ENCODE measurements at regions of chr22 and their contacts with region 1.

Region 1: DNA sequence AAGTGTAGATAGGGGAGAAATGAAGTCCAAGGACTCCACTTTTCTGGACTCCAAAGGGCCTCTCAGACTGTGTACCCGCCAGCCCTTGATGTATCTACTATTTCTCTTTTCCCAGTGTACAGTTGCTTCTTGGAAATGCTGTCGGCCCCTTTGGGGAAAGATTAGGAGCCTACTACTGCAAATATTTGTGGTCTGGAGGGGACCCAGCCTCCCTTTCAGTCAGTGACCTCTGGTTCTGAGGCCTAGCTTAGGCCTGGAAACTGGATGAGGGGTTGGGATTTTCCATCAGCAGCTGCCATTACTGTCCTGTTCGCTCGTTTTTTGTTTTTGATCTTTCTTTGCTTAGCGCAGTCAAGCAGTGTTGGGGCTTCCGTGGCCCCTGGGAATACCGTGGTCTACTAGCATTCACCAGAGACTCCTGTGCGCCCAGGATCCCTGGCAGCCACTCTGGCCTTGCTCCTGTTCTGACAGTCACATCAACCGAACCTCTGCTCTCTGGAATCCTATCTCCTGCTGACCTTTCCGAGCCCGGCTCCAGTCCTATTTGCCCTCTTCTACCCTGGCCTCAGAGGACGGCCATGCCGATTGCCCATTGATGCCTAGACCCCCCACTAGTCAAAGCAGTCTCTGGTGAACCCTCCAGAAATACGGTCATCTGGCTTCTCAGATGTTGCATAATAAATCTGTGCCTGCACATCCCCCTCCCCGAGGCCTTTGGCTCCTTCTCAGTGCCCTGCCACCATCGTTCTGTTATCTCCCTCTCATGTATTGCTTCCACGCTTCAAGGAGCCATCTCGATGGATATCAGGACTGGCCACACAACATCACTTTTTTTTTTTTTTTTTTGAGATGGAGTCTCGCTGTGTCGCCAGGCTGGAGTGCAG is 1.3 kb upstream of the RRP7A start:
- DNase-seq: no peak
- ATAC-seq: no peak
- H3K4me3 Mint-ChIP-seq: peak overlapping the region; percentile 59
- H3K27ac Mint-ChIP-seq: no peak overlapping the region
- H3K4me1 Mint-ChIP-seq: peaks cover 18% of the 10 kb centered on the region
- H3K27me3 Mint-ChIP-seq: no peaks in the 10 kb centered on the region
- CTCF ChIP-seq: no peak

Region 2: DNA sequence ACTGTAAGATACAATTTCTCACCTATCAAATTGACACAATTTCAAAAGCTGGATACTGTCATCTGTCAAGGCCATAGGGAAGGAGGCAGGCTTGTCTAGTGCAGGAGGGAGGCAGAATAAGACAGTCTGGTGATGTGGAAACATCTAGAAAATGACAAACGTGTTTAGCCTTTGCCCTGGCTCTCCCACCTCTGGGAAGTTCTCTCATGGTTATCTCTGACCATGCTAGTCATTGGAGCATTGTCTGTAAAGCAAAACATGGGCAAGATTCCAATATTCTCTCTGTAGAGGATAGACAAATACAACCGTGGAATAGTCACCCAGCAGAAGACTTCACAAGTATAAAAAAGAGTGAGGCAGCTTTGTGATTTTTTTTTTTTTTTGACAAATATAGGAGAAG is 23.8 kb after region 1 on chr22:
- CTCF ChIA-PET with region 1: no interaction called
- POLR2A ChIA-PET with region 1: interaction called, 10 read pairs
- intact Hi-C with region 1: no loop called
- DNase-seq: no peak
- ATAC-seq: no peak
- H3K4me3 Mint-ChIP-seq: no peak overlapping the region
- H3K27ac Mint-ChIP-seq: no peak overlapping the region
- H3K4me1 Mint-ChIP-seq: peaks cover 18% of the 10 kb centered on the region
- H3K27me3 Mint-ChIP-seq: no peaks in the 10 kb centered on the region
- CTCF ChIP-seq: no peak

Region 3: GRCh38 chr22:42553475-42554361 is 32.8 kb after region 1 on chr22 and contains the start of gene SERHL2:
- CTCF ChIA-PET with region 1: no interaction called
- POLR2A ChIA-PET with region 1: no interaction called
- intact Hi-C with region 1: loop called (anchors 2 kb)
- DNase-seq: peak; percentile 97
- ATAC-seq: peak; percentile 95
- H3K4me3 Mint-ChIP-seq: peak within 1 kb of the TSS; percentile 86
- H3K27ac Mint-ChIP-seq: peak within 1 kb of the TSS; percentile 80
- H3K4me1 Mint-ChIP-seq: peaks cover 52% of the 10 kb centered on the region
- H3K27me3 Mint-ChIP-seq: no peaks in the 10 kb centered on the region
- CTCF ChIP-seq: no peak
- total RNA-seq, gene SERHL2: 0.91 and 1.7 TPM in 2 replicates